ENCODE measurements at regions of chr11 and their contacts with region 1.

Region 1: DNA sequence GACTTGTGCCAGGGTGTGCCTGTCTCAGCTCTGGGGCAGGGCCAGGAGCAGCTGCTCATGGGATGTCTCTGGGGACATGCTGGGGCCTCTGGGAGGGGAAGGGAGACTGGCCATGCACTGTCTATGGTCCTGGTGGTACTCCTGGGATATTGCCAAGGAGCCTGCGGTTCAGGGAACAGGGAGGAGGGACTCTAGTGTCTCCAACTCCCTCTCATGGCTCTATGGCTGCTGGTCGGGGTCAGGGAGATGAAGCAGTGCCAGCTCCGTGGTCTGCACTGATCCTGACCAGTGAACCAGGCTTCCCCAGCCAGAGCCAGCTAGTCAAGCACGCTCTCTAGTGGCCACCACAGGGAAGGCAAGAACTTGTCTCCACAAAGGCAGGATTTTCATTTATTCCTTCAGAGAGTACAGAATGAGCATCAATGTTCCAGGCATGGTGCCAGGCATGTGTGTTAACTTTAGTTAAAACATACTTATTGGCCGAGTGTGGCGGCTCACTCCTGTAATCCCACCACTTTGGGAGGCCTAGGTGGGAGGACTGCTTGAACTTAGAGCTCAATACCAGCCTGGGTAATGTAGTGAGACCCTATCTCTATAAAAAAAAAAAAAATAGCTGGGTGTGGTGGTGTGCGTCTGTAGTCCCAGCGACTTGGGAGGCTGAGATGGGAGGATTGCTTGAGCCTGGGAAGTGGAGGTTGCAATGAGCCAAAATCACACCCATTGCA is 2.5 kb upstream of the BEST1 start:
- DNase-seq: peak; percentile 89
- H3K4me3 Mint-ChIP-seq: no peak overlapping the region
- H3K27ac Mint-ChIP-seq: no peak overlapping the region
- H3K4me1 Mint-ChIP-seq: peaks cover 15% of the 10 kb centered on the region
- H3K27me3 Mint-ChIP-seq: peaks cover 11% of the 10 kb centered on the region
- CTCF ChIP-seq: peak; percentile 84

Region 2: GRCh38 chr11:61627567-61628445 is 319.8 kb before region 1 on chr11:
- CTCF ChIA-PET with region 1: no interaction called
- POLR2A ChIA-PET with region 1: no interaction called
- intact Hi-C with region 1: no loop called
- DNase-seq: peak; percentile 75
- H3K4me3 Mint-ChIP-seq: no peak overlapping the region
- H3K27ac Mint-ChIP-seq: peak overlapping the region; percentile 54
- H3K4me1 Mint-ChIP-seq: peaks cover 12% of the 10 kb centered on the region
- H3K27me3 Mint-ChIP-seq: no peaks in the 10 kb centered on the region
- CTCF ChIP-seq: peak; percentile 94

Region 3: DNA sequence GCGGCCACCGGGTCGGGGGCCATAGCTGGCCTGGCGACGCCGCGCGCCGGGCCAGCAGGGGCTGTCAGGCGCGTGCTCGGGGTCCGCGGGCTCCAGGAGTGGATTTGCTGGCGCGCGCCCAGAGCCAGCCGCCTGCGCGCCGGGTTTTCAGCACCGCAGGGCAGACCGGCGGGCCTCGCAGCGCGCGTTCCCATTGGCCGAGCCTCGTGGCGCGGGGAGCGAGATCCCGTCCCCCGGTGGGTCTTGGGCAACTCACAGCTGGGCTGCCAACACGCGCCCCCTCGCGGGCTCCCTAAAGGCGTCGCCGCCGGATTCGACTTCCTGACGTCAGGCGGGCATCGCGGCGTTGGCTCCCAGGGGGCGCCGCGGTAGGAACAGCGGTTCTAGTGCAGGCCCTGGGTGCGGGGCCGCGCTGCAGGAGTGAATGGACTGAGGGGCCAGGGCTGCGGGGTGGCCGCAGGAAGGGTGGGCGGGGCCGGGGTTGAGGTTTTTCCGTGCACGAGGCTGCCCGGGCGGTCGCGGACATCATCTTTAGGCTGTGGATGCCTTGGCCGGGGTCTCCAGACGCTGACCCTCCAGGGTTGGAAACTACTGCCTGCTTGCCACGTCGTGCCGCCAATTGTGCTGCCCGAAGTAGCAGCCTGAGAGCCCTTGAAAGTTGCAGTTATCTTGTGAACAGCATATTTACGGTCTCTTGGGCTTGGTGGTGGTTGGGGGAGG is 130.8 kb before region 1 on chr11 and contains the start of gene FADS1:
- CTCF ChIA-PET with region 1: interaction called, 12 read pairs
- POLR2A ChIA-PET with region 1: interaction called, 3 read pairs
- intact Hi-C with region 1: no loop called
- DNase-seq: peak; percentile 85
- H3K4me3 Mint-ChIP-seq: peak within 1 kb of the TSS; percentile 93
- H3K27ac Mint-ChIP-seq: peak within 1 kb of the TSS; percentile 93
- H3K4me1 Mint-ChIP-seq: peaks cover 34% of the 10 kb centered on the region
- H3K27me3 Mint-ChIP-seq: no peaks in the 10 kb centered on the region
- CTCF ChIP-seq: peak; percentile 50
- total RNA-seq, gene FADS1: 24.2 and 27.5 TPM in 2 replicates

Region 4: GRCh38 chr11:61891331-61892084 is 56.1 kb before region 1 on chr11 and contains the start of gene FADS3:
- CTCF ChIA-PET with region 1: interaction called, 217 read pairs
- POLR2A ChIA-PET with region 1: interaction called, 3 read pairs
- intact Hi-C with region 1: no loop called
- DNase-seq: peak; percentile 77
- H3K4me3 Mint-ChIP-seq: peak within 1 kb of the TSS; percentile 83
- H3K27ac Mint-ChIP-seq: peak within 1 kb of the TSS; percentile 61
- H3K4me1 Mint-ChIP-seq: peaks cover 23% of the 10 kb centered on the region
- H3K27me3 Mint-ChIP-seq: no peaks in the 10 kb centered on the region
- CTCF ChIP-seq: no peak
- total RNA-seq, gene FADS3: 145 and 184 TPM in 2 replicates

Region 5: GRCh38 chr11:61923166-61924063 is 24.2 kb before region 1 on chr11:
- CTCF ChIA-PET with region 1: interaction called, 31 read pairs
- POLR2A ChIA-PET with region 1: no interaction called
- intact Hi-C with region 1: no loop called
- DNase-seq: no peak
- H3K4me3 Mint-ChIP-seq: no peak overlapping the region
- H3K27ac Mint-ChIP-seq: no peak overlapping the region
- H3K4me1 Mint-ChIP-seq: no peaks in the 10 kb centered on the region
- H3K27me3 Mint-ChIP-seq: peaks cover 28% of the 10 kb centered on the region
- CTCF ChIP-seq: no peak

Region 6: GRCh38 chr11:61985885-61986345 is 38.3 kb after region 1 on chr11:
- CTCF ChIA-PET with region 1: no interaction called
- POLR2A ChIA-PET with region 1: no interaction called
- intact Hi-C with region 1: no loop called
- DNase-seq: no peak
- H3K4me3 Mint-ChIP-seq: no peak overlapping the region
- H3K27ac Mint-ChIP-seq: no peak overlapping the region
- H3K4me1 Mint-ChIP-seq: peaks cover 5% of the 10 kb centered on the region
- H3K27me3 Mint-ChIP-seq: no peaks in the 10 kb centered on the region
- CTCF ChIP-seq: no peak

Region 7: GRCh38 chr11:62048065-62048464 is 100.4 kb after region 1 on chr11:
- CTCF ChIA-PET with region 1: interaction called, 20 read pairs
- POLR2A ChIA-PET with region 1: interaction called, 13 read pairs
- intact Hi-C with region 1: no loop called
- DNase-seq: peak; percentile 31
- H3K4me3 Mint-ChIP-seq: peak overlapping the region; percentile 31
- H3K27ac Mint-ChIP-seq: peak overlapping the region; percentile 77
- H3K4me1 Mint-ChIP-seq: peaks cover 35% of the 10 kb centered on the region
- H3K27me3 Mint-ChIP-seq: no peaks in the 10 kb centered on the region
- CTCF ChIP-seq: no peak

Region 8: GRCh38 chr11:62081378-62082291 is 134.0 kb after region 1 on chr11:
- CTCF ChIA-PET with region 1: interaction called, 33 read pairs
- POLR2A ChIA-PET with region 1: interaction called, 3 read pairs
- intact Hi-C with region 1: loop called (anchors 1 kb)
- DNase-seq: peak; percentile 66
- H3K4me3 Mint-ChIP-seq: no peak overlapping the region
- H3K27ac Mint-ChIP-seq: no peak overlapping the region
- H3K4me1 Mint-ChIP-seq: peaks cover 7% of the 10 kb centered on the region
- H3K27me3 Mint-ChIP-seq: no peaks in the 10 kb centered on the region
- CTCF ChIP-seq: peak; percentile 87

Region 9: DNA sequence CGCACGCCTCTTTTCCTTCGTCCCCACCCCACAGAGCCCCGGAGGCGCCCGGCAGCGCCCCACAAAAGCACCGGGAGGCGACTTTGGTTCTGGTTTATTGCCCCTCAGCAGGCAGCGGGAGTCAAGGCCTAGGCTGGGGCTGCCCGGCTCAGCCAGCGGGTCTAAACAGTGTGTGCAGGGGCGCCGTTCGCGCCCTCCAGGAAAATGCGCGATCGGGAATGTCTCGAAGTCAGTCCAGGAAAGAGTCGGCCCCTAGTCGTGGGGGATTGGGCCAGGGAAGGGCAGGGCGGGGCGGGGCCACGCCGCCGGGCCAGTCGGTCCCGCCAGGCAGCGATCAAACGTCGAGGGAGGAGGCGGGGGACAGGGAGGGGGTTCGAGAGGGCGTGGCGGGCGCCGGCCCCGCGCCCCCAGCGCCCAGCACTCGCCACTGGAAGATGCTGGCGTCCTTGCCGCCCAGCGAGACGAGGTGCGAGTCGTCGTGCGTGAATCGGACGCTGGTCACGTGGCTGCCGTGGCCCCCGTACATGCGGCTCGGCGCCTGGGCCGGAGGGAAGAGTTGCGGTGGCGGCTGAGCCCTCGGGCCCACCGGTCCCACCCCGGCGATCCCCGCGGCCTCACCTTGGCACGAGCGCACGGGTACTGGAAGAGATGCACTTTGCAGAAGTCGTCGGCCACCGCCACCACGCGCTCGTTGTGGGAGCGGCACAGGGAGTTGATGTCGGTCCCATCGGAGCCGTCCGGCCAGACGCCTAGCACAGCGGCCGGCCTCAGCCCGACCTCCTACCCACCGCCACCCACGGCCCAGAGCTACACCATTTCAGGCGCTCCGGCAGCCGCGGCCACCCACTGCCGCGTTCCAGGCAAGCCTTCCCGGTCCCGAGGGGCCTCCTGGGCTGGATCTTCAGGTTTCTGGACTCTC is 654.8 kb after region 1 on chr11:
- CTCF ChIA-PET with region 1: no interaction called
- POLR2A ChIA-PET with region 1: no interaction called
- intact Hi-C with region 1: no loop called
- DNase-seq: no peak
- H3K4me3 Mint-ChIP-seq: peak overlapping the region; percentile 86
- H3K27ac Mint-ChIP-seq: peak overlapping the region; percentile 96
- H3K4me1 Mint-ChIP-seq: peaks cover 38% of the 10 kb centered on the region
- H3K27me3 Mint-ChIP-seq: no peaks in the 10 kb centered on the region
- CTCF ChIP-seq: no peak